Naive thymus-derived CD4-positive, alpha-beta T cell (primary cell): ENCODE measurements at regions of chr14 and their contacts with region 1.

Region 1: GRCh38 chr14:100375963-100376735 is 53.0 kb downstream of the SLC25A47 start:
- DNase-seq: peak; percentile 87 to 96 (median 90)
- ATAC-seq: peak; percentile 90
- H3K4me3 ChIP-seq: peak within 1 kb of the TSS; percentile 78
- H3K4me3 Mint-ChIP-seq: peak within 1 kb of the TSS; percentile 79 to 95 (median 93)
- H3K27ac ChIP-seq: peak within 1 kb of the TSS; percentile 75
- H3K27ac Mint-ChIP-seq: peak within 1 kb of the TSS; percentile 71 to 96 (median 91)
- H3K4me1 ChIP-seq: peaks cover 19 to 26% of the 10 kb centered on the region in 2 donors
- H3K4me1 Mint-ChIP-seq: peaks cover 23 to 52% (median 37%) of the 10 kb centered on the region in 7 donors
- H3K27me3 ChIP-seq: no peaks in the 10 kb centered on the region
- H3K27me3 Mint-ChIP-seq: no peaks in the 10 kb centered on the region

Region 2: DNA sequence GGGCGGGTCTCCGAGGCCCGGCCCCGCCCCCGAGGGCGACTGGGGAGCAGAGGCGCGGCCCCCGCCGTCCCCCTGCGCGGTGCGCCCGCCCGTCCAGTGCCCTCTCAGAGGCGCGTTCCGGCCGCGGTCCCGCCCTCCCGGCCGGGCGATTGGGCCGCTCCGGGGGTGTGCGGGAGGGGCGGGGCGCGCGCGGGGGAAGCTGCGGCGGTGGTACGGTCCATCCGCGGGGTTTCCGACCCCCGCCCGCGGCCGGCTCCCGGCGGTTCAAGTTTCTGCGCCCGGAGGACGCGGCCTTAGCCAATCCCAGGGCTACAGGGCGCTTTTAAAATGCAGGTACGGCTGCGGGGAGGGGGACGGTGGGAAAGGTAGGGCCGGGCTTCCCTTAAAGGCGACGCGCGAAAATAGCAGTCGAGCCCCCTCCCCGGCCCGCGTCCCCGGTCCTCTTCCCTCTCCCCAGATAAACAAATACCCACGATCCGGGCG is 771.8 kb before region 1 on chr14:
- CTCF ChIA-PET with region 1: no interaction called
- POLR2A ChIA-PET with region 1: no interaction called
- intact Hi-C with region 1: loop called in 1 of 2 experiments (anchors 2 kb)
- DNase-seq: peak; percentile 93 to 99 (median 97)
- ATAC-seq: peak; percentile 95
- H3K4me3 ChIP-seq: peak overlapping the region; percentile 95
- H3K4me3 Mint-ChIP-seq: peak overlapping the region; percentile 83 to 97 (median 91)
- H3K27ac ChIP-seq: peak overlapping the region; percentile 80
- H3K27ac Mint-ChIP-seq: peak overlapping the region; percentile 62 to 97 (median 86)
- H3K4me1 ChIP-seq: peaks cover 16 to 19% of the 10 kb centered on the region in 2 donors
- H3K4me1 Mint-ChIP-seq: peaks cover 7 to 40% (median 38%) of the 10 kb centered on the region in 7 donors
- H3K27me3 ChIP-seq: no peaks in the 10 kb centered on the region
- H3K27me3 Mint-ChIP-seq: peaks cover 0 to 13% (median 0%) of the 10 kb centered on the region in 5 donors

Region 3: GRCh38 chr14:99971087-99971940 is 404.8 kb before region 1 on chr14:
- CTCF ChIA-PET with region 1: interaction called, 3 read pairs
- POLR2A ChIA-PET with region 1: no interaction called
- intact Hi-C with region 1: loop called in 1 of 2 experiments (anchors 1 kb)
- DNase-seq: peak; percentile 69 to 87 (median 81)
- ATAC-seq: peak; percentile 95
- H3K4me3 ChIP-seq: peak overlapping the region; percentile 53
- H3K4me3 Mint-ChIP-seq: peak overlapping the region; percentile 43 to 93 (median 76)
- H3K27ac ChIP-seq: peak overlapping the region; percentile 58
- H3K27ac Mint-ChIP-seq: peak overlapping the region in 4 of 9 donors; percentile 21 to 87 (median 48)
- H3K4me1 ChIP-seq: no peaks in the 10 kb centered on the region
- H3K4me1 Mint-ChIP-seq: peaks cover 7 to 21% (median 15%) of the 10 kb centered on the region in 7 donors
- H3K27me3 ChIP-seq: no peaks in the 10 kb centered on the region
- H3K27me3 Mint-ChIP-seq: peaks cover 0 to 33% (median 7%) of the 10 kb centered on the region in 5 donors

Region 4: DNA sequence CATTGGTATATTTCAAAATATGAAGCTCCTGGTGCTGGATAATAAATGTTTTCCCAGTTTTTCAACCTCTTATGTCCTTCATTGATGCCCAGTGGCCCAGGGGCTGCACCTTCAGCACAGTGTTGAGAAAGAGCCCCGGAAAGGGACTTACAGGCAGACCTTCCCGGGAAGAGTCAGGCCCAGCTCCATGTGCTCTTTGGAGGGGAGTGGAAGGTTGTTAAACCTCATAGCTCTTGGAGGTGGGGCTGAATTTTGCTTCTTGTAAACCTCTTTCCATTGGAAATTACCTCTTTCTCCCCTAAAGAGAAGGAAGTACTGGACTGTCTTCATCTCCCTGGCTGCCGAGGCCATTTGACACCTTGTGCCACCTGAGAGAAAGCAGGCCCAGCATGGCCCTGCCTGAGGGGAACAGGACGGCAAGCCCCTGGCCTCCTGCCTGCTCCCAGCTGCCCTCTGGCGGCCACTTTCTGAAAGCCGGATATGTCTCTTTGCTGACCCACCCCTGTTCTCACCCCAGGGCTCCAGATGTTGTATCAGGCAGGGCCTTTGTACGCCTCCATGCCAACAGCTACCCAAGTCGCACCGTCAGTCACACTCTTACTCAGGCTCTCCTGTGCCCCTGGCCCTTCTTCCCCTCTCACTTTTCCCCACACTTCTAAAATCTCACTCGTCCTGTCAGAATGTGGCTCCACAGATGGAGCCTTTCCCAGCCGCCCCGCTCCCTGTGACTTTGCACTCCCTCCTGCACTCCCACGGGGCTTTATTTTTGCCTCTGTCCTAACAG is 267.9 kb before region 1 on chr14:
- CTCF ChIA-PET with region 1: no interaction called
- POLR2A ChIA-PET with region 1: no interaction called
- intact Hi-C with region 1: loop called in 1 of 2 experiments (anchors 10 kb)
- DNase-seq: peak; percentile 76 to 88 (median 84)
- ATAC-seq: peak; percentile 80
- H3K4me3 ChIP-seq: no peak overlapping the region
- H3K4me3 Mint-ChIP-seq: peak overlapping the region; percentile 13 to 93 (median 64)
- H3K27ac ChIP-seq: peak overlapping the region; percentile 83
- H3K27ac Mint-ChIP-seq: peak overlapping the region; percentile 89 to 98 (median 96)
- H3K4me1 ChIP-seq: peaks cover 49 to 74% of the 10 kb centered on the region in 2 donors
- H3K4me1 Mint-ChIP-seq: peaks cover 72 to 91% (median 82%) of the 10 kb centered on the region in 7 donors
- H3K27me3 ChIP-seq: no peaks in the 10 kb centered on the region
- H3K27me3 Mint-ChIP-seq: no peaks in the 10 kb centered on the region

Region 5: DNA sequence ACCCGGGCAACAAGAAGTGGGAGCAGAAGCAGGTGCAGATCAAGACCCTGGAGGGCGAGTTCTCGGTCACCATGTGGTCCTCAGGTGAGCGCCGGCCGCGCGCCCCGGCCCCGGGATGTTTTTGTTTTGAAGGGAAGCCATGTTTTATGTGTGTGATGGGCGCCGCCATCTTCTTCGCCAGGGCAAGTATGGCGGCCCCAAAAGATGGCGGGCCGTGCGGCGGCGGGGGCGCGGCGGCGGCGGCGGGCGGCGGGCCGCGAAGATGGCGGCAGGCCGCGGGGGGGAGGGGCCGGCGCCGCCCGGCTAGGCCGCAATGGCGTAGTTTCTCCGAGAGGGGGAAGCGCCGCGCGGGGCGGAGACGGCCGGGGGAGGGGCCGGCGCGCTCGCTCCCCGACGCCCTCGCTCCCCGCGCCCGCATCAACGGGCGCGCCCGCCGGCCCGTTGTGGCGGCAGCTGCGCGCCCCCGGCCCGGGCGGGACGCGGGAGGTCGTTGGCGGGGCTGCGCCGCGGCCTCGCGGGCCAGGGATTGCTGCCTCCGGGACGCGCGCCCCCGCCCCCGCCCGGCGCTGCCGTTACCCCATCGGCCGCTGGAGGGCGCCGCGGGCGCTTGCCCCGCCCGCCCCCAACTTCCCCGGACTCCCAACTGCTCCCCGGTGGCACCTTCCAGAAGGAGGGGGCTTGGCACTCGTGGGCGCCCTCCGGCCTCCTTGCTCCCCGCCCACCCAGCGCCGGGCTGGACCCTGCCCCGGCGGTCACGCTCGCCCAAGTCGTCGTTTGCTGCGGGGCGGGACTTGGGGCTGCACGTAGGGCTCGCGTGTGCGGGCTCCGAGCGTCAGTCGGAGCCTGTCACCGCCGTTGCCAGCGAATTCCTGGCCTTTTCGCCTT is 136.1 kb before region 1 on chr14:
- CTCF ChIA-PET with region 1: no interaction called
- POLR2A ChIA-PET with region 1: no interaction called
- intact Hi-C with region 1: loop called (anchors 1 kb)
- DNase-seq: peak; percentile 81 to 91 (median 88)
- ATAC-seq: peak; percentile 65
- H3K4me3 ChIP-seq: peak overlapping the region; percentile 85
- H3K4me3 Mint-ChIP-seq: peak overlapping the region; percentile 88 to 100 (median 94)
- H3K27ac ChIP-seq: peak overlapping the region; percentile 98
- H3K27ac Mint-ChIP-seq: peak overlapping the region; percentile 85 to 99 (median 96)
- H3K4me1 ChIP-seq: peaks cover 35 to 43% of the 10 kb centered on the region in 2 donors
- H3K4me1 Mint-ChIP-seq: peaks cover 41 to 69% (median 53%) of the 10 kb centered on the region in 7 donors
- H3K27me3 ChIP-seq: no peaks in the 10 kb centered on the region
- H3K27me3 Mint-ChIP-seq: peaks cover 0 to 2% (median 0%) of the 10 kb centered on the region in 5 donors

Region 6: GRCh38 chr14:100306420-100307219 is 69.5 kb before region 1 on chr14 and contains the start of gene SLC25A29:
- CTCF ChIA-PET with region 1: no interaction called
- POLR2A ChIA-PET with region 1: no interaction called
- intact Hi-C with region 1: loop called (anchors 2 kb)
- DNase-seq: peak; percentile 26 to 87 (median 39)
- ATAC-seq: peak; percentile 93
- H3K4me3 ChIP-seq: peak within 1 kb of the TSS; percentile 59
- H3K4me3 Mint-ChIP-seq: peak within 1 kb of the TSS; percentile 83 to 95 (median 88)
- H3K27ac ChIP-seq: peak within 1 kb of the TSS; percentile 51
- H3K27ac Mint-ChIP-seq: peak within 1 kb of the TSS in 4 of 9 donors; percentile 49 to 81 (median 56)
- H3K4me1 ChIP-seq: peaks cover 4 to 7% of the 10 kb centered on the region in 2 donors
- H3K4me1 Mint-ChIP-seq: peaks cover 0 to 24% (median 10%) of the 10 kb centered on the region in 7 donors
- H3K27me3 ChIP-seq: no peaks in the 10 kb centered on the region
- H3K27me3 Mint-ChIP-seq: peaks cover 0 to 39% (median 0%) of the 10 kb centered on the region in 5 donors
- total RNA-seq, gene SLC25A29: 5.9 to 25.6 (median 10.4) TPM

Region 7: DNA sequence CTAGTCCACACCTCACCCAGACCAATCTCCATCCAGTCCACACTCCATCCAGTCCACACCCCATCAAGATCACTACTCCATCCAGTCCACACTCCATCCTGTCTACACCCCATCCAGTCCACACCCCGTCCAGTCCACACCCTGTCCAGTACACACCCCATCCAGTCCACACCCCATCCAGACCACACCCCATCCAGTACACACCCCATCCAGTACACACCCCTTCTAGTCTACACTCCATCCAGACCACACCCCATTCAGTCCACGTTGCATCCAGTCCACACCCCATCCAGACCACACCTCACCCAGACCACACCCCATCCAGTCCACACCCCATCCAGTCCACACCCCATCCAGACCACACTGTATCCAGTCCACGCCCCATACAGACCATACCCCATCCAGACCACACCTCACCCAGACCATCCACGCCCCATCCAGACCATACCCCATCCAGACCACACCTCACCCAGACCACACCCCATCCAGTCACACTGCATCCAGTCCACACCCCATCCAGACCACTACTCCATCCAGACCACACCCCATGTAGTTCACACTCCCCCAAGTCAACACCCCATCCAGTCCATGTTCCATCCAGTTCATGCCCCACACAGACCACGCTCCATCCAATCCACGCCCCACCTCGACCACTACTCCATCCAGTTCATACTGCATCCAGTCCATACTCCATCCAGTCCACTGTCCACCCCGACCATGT is 644.0 kb after region 1 on chr14:
- CTCF ChIA-PET with region 1: no interaction called
- POLR2A ChIA-PET with region 1: no interaction called
- intact Hi-C with region 1: no loop called
- DNase-seq: peak in 1 of 9 donors; percentile 8
- ATAC-seq: peak; percentile 20
- H3K4me3 ChIP-seq: no peak overlapping the region
- H3K4me3 Mint-ChIP-seq: no peak overlapping the region
- H3K27ac ChIP-seq: no peak overlapping the region
- H3K27ac Mint-ChIP-seq: no peak overlapping the region
- H3K4me1 ChIP-seq: no peaks in the 10 kb centered on the region
- H3K4me1 Mint-ChIP-seq: no peaks in the 10 kb centered on the region
- H3K27me3 ChIP-seq: no peaks in the 10 kb centered on the region
- H3K27me3 Mint-ChIP-seq: peaks cover 0 to 46% (median 41%) of the 10 kb centered on the region in 5 donors